ENCODE measurements at regions of chr2 and their contacts with region 1.

Region 1: GRCh38 chr2:67259581-67260342 is 137.4 kb upstream of the ETAA1 start:
- DNase-seq: peak; percentile 71
- H3K4me3 Mint-ChIP-seq: no peak overlapping the region
- H3K27ac Mint-ChIP-seq: peak overlapping the region; percentile 87
- H3K4me1 Mint-ChIP-seq: peaks cover 33% of the 10 kb centered on the region
- H3K27me3 Mint-ChIP-seq: no peaks in the 10 kb centered on the region
- CTCF ChIP-seq: no peak

Region 2: DNA sequence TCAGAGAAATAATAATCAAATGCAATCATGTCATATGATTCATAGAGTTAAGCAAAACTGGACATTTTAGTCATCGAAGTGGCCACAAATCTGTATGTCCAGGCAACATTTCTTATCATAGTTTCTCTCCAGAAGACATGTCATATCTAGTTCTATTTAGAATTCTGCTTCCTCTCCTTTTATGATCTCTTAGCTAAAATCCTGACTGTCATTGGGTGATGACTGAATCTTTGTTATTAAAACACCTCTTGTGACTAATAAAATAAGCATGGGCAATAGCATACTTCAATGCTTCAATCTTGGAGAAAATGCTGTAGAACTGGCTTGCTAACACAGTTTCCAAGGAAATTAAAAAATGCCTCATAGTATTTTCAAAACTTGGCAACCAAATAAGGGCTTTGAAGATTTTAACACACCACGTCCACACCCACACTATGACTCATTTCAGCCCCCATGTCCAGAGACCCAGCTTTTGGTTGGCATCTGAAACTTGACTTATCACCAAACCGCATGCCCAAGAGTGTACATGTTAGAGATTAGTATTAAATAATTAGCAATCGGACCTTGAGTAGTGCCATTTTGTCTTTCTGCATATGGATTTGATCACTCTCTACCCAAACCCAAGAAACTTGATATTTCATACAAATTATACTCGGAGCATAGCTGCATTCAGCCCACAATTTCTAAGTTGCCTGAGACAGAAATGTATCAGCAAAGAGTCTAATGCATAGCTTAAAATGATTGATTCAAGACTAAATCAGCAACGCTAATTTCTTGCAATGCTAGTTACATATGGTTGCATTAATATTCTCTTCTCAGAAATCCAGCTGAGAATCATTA is 30.9 kb after region 1 on chr2:
- CTCF ChIA-PET with region 1: interaction called, 3 read pairs
- POLR2A ChIA-PET with region 1: interaction called, 13 read pairs
- intact Hi-C with region 1: no loop called
- DNase-seq: peak; percentile 74
- H3K4me3 Mint-ChIP-seq: no peak overlapping the region
- H3K27ac Mint-ChIP-seq: peak overlapping the region; percentile 89
- H3K4me1 Mint-ChIP-seq: peaks cover 16% of the 10 kb centered on the region
- H3K27me3 Mint-ChIP-seq: no peaks in the 10 kb centered on the region
- CTCF ChIP-seq: no peak

Measured in MCF 10A (cell line).